Mammary epithelial cell (primary cell): ENCODE measurements at regions of chr10 and their contacts with region 1.

Region 1: DNA sequence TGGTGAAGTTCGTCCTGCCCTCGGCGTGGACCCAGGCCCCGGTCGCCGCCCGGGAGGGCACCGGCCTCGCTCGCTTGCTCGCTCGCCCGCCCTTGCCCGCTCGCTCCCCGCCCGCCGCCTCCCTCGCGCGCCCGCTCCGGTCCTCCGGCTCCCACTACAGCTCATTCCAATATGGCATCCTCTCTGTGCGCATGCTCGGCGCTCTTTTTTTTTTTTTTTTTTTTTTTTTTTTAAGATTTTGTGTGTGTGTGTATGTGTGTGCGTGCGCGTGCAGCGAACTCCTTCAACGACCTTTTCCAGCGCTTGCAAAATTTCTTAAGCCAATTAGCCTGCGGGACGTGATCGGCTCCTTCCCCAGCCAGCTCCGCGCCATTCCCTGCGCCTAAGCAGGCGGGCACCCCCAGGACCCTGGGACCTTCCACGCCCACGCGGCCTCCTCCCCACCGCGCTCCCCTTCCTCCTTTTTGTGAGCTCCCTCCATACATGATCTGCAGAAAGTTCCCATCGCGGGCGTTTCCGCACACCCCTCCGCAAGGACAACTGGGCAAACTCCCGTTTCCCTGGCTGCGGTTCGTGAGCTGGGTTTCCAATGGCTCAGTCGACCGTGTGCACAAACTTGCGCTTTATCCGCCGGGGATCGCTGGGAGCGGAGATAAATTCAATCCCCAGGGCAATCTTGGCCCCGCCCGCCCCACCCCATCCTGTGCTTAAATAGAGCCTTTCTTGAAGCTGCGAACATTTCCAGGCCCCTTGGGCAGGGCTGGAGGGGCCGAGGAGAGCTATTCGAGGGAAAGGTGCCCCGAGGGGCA is at the start of gene SFMBT2:
- DNase-seq: peak; percentile 64
- H3K4me3 ChIP-seq: peak within 1 kb of the TSS; percentile 53 to 71 (median 60)
- H3K27ac ChIP-seq: no peak within 1 kb of the TSS
- H3K4me1 ChIP-seq: peaks cover 29% of the 10 kb centered on the region
- H3K27me3 ChIP-seq: peaks cover 54% of the 10 kb centered on the region
- CTCF ChIP-seq: peak in 1 of 2 donors; percentile 27
- total RNA-seq, gene SFMBT2: 1.5 to 2.2 TPM

Region 2: DNA sequence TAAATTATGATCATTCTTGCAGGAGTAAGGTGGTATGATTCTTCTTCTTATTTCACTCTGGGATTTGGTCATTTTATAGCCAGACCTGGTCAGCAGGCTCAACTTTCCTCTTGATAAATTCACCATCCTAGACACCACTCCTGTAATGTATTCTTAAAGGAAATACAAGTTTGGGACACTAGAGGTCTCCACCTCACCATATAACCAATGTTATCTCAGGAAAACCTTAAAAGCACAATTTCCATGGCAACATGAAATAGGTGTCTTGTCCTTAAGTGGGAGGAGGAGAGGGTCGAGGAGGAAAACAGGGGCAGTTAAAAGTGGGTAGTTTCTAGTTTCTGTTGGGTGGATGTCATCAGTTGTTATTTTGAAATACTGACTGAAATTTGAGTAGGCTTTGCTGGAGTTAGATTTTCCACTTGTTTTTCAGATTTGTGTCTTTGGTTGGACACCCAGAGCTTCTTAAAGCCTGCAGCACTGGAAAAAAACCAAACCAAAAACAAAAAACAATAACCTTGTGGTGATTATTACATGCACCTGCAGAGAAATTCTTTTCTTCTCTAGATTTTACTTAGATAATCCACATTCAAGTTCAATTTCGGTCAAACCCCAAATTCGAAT is 994.1 kb before region 1 on chr10:
- CTCF ChIA-PET with region 1: no interaction called
- dilution Hi-C with region 1: no loop called
- in situ Hi-C with region 1: loop called in 1 of 2 experiments (anchors 10 kb)
- intact Hi-C with region 1: loop called (anchors 2 kb)
- DNase-seq: peak; percentile 31
- H3K4me3 ChIP-seq: no peak overlapping the region
- H3K27ac ChIP-seq: no peak overlapping the region
- H3K4me1 ChIP-seq: no peaks in the 10 kb centered on the region
- H3K27me3 ChIP-seq: no peaks in the 10 kb centered on the region
- CTCF ChIP-seq: peak; percentile 64 to 70

Region 3: GRCh38 chr10:6688661-6689435 is 722.2 kb before region 1 on chr10:
- CTCF ChIA-PET with region 1: no interaction called
- dilution Hi-C with region 1: no loop called
- in situ Hi-C with region 1: loop called in 1 of 2 experiments (anchors 10 kb)
- intact Hi-C with region 1: no loop called
- DNase-seq: no peak
- H3K4me3 ChIP-seq: no peak overlapping the region
- H3K27ac ChIP-seq: no peak overlapping the region
- H3K4me1 ChIP-seq: peaks cover 8% of the 10 kb centered on the region
- H3K27me3 ChIP-seq: no peaks in the 10 kb centered on the region
- CTCF ChIP-seq: no peak

Region 4: DNA sequence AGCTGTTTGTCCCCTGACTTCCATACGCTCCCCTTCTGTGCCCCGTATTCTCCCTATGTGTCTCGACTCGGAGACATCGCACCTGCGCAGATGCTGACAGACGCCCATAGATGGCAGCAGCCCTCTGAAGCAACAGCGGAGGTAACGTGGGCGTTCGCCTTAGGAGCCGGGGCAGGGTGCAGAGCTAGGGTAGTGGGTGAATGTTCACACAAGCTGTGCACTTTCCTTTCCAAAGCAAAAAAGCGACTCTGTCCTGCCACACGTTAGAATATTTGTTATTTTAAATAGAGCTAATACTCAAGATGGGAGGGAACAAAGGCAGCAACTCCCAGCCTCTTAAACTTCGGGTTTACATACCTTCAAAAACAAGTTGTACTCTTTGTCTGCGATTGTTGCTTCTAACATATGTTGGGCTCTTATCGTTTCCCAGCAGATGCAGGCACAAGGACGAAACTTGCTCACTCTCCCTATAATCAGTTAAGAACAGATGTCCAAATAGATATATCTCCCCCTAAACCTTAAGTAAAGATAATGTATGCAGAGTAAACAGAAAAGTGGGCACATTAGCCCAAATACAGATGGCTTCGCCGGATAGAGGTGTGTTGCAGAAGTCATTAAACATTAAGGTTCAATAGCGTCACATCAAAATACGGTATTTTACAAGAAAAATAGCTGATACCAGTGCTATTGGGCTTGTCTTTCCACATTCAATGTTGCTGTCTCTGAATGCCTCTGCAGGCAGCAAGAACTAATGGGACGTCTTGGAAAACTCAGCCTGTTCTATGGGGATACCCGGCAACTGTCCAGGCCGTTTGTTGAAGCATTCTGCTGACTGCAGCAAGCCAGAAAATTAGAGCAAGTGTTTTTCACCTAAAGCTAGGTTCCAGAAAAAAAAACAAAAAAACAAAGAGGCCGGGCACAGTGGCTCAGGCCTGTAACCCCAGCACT is 490.7 kb before region 1 on chr10:
- CTCF ChIA-PET with region 1: interaction called, 15 read pairs
- dilution Hi-C with region 1: no loop called
- in situ Hi-C with region 1: loop called in 1 of 2 experiments (anchors 10 kb)
- intact Hi-C with region 1: loop called (anchors 1 kb)
- DNase-seq: peak; percentile 48
- H3K4me3 ChIP-seq: no peak overlapping the region
- H3K27ac ChIP-seq: no peak overlapping the region
- H3K4me1 ChIP-seq: peaks cover 6% of the 10 kb centered on the region
- H3K27me3 ChIP-seq: peaks cover 6% of the 10 kb centered on the region
- CTCF ChIP-seq: peak; percentile 81 to 89

Region 5: DNA sequence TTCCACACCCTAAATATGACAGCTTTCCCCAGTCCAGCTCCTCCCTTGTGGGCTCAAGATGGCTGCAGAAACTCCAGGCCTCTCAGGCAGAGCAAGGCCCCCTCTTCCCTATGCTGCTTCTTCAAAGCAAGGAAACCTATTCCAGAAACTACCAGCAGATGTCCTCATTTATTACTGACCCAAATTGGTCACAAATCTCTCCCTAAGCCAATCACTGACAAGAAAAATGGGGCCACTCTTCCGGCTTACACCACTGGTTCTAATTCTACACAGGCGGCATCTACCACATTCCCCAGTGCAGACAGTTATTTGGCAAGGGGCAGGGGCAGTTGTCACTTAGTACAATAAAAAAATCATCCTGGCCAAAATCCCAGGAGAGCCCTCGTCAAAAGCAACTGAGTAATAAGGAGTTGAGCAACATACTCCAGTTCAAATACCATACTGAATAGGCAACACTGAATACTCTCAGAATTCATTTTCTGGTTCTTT is 150.6 kb before region 1 on chr10:
- CTCF ChIA-PET with region 1: no interaction called
- dilution Hi-C with region 1: no loop called
- in situ Hi-C with region 1: no loop called
- intact Hi-C with region 1: loop called (anchors 1 kb)
- DNase-seq: peak; percentile 53
- H3K4me3 ChIP-seq: no peak overlapping the region
- H3K27ac ChIP-seq: no peak overlapping the region
- H3K4me1 ChIP-seq: peaks cover 7% of the 10 kb centered on the region
- H3K27me3 ChIP-seq: no peaks in the 10 kb centered on the region
- CTCF ChIP-seq: peak; percentile 50 to 53

Region 6: GRCh38 chr10:7457478-7458316 is 46.6 kb after region 1 on chr10:
- CTCF ChIA-PET with region 1: no interaction called
- dilution Hi-C with region 1: no loop called
- in situ Hi-C with region 1: no loop called
- intact Hi-C with region 1: no loop called
- DNase-seq: no peak
- H3K4me3 ChIP-seq: no peak overlapping the region
- H3K27ac ChIP-seq: no peak overlapping the region
- H3K4me1 ChIP-seq: no peaks in the 10 kb centered on the region
- H3K27me3 ChIP-seq: no peaks in the 10 kb centered on the region
- CTCF ChIP-seq: no peak

Region 7: DNA sequence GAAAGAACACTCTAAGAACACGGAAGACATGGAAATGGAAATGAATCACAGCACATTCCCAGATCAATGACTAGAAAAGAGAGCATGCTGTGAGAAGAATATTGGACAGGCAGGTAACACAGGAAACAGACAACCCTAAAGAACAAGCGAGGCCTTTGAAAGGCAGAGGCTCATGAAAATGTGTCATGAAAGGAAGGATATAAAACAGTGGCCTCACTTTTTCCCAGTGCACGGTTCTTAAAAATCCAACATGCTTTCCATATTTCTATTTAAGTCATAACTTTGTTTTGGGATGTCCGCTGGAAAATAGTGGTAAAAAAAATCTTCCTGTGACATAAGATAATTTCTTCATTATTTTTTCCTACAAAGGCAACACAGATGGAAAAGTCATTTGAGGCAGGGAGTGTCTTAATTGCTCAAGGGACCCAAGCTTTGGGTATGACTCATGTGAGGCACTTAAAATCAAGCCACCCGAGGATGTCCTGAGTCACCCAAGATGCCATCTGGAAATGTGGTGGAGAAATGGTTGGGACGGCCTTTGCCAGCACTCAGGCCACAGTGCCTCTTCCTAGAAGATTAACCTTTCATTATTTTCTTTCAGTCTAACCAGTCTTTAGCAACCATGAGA is 238.7 kb after region 1 on chr10:
- CTCF ChIA-PET with region 1: no interaction called
- dilution Hi-C with region 1: no loop called
- in situ Hi-C with region 1: no loop called
- intact Hi-C with region 1: no loop called
- DNase-seq: no peak
- H3K4me3 ChIP-seq: no peak overlapping the region
- H3K27ac ChIP-seq: no peak overlapping the region
- H3K4me1 ChIP-seq: no peaks in the 10 kb centered on the region
- H3K27me3 ChIP-seq: no peaks in the 10 kb centered on the region
- CTCF ChIP-seq: no peak